ENCODE measurements at regions of chr6 and their contacts with region 1.

Region 1: DNA sequence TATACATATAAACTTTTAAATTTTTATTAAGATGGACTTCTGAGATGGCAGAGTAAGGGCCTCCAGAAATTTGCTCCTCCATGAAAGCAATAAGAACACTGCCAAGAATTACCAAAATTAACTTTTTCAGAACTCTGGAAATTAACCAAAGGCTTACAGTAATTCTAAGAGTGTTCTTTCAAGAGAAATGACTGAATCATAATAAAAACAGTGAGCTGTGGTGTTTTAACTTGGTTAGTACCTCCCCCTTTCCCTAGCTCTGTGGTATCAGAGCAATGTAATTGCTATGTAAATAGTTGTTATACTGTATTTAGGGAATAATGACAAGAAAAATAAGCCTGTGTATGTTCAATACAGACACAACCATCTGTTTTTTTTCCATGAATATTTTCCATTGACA is 19.0 kb downstream of the HECA start:
- DNase-seq: no peak
- H3K4me3 Mint-ChIP-seq: no peak overlapping the region
- H3K27ac Mint-ChIP-seq: peak overlapping the region; percentile 31
- H3K4me1 Mint-ChIP-seq: peaks cover 79% of the 10 kb centered on the region
- H3K27me3 Mint-ChIP-seq: no peaks in the 10 kb centered on the region

Region 2: GRCh38 chr6:139134817-139135581 is 18.9 kb before region 1 on chr6 and contains the start of gene HECA:
- CTCF ChIA-PET with region 1: interaction called, 16 read pairs
- POLR2A ChIA-PET with region 1: no interaction called
- DNase-seq: peak; percentile 99
- H3K4me3 Mint-ChIP-seq: peak within 1 kb of the TSS; percentile 87
- H3K27ac Mint-ChIP-seq: peak within 1 kb of the TSS; percentile 98
- H3K4me1 Mint-ChIP-seq: peaks cover 65% of the 10 kb centered on the region
- H3K27me3 Mint-ChIP-seq: no peaks in the 10 kb centered on the region
- total RNA-seq, gene HECA: 59.2 to 60.1 TPM

Region 3: DNA sequence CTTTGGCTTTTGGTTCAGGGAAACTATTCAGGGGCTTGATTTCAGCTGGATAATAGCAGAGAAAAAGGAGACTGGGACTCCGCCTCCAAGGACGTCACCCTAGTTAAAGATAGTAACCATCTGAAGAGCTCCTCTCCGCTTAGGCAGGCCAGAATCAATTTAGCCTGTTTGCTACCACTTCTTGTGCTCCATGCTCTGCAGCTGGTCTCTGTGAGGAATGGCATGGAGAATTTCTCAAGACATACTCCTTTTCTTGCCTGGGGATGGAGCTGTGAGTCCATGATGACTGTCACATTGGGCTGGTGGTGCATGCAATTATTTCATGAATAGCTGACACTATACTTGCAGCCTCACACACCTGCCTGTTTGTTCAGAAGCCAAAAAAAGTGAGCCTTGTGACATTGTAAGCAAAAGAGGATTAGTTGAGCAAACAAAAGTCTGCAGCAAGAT is 76.6 kb after region 1 on chr6:
- CTCF ChIA-PET with region 1: no interaction called
- POLR2A ChIA-PET with region 1: no interaction called
- DNase-seq: no peak
- H3K4me3 Mint-ChIP-seq: no peak overlapping the region
- H3K27ac Mint-ChIP-seq: no peak overlapping the region
- H3K4me1 Mint-ChIP-seq: no peaks in the 10 kb centered on the region
- H3K27me3 Mint-ChIP-seq: no peaks in the 10 kb centered on the region

Measured in activated CD4-positive, alpha-beta T cell treated with anti-CD3 and anti-CD28 coated beads, Interleukin-2, amount 10 ng/mL, durations not matched to agents 7 days and 5 days (primary cell).